ENCODE measurements at regions of chr17 and their contacts with region 1.

Region 1: GRCh38 chr17:50865984-50866774 is at the start of gene TOB1:
- DNase-seq: peak; percentile 93 to 98 (median 97)
- ATAC-seq: peak; percentile 59
- H3K4me3 ChIP-seq: peak within 1 kb of the TSS; percentile 92
- H3K4me3 Mint-ChIP-seq: peak within 1 kb of the TSS; percentile 98
- H3K27ac ChIP-seq: peak within 1 kb of the TSS; percentile 92 to 98
- H3K27ac Mint-ChIP-seq: peak within 1 kb of the TSS; percentile 98
- H3K4me1 ChIP-seq: peaks cover 38% of the 10 kb centered on the region
- H3K4me1 Mint-ChIP-seq: peaks cover 68% of the 10 kb centered on the region
- H3K27me3 ChIP-seq: no peaks in the 10 kb centered on the region
- H3K27me3 Mint-ChIP-seq: peaks cover 5% of the 10 kb centered on the region
- CTCF ChIP-seq: no peak
- total RNA-seq, gene TOB1: 419 to 449 TPM

Region 2: DNA sequence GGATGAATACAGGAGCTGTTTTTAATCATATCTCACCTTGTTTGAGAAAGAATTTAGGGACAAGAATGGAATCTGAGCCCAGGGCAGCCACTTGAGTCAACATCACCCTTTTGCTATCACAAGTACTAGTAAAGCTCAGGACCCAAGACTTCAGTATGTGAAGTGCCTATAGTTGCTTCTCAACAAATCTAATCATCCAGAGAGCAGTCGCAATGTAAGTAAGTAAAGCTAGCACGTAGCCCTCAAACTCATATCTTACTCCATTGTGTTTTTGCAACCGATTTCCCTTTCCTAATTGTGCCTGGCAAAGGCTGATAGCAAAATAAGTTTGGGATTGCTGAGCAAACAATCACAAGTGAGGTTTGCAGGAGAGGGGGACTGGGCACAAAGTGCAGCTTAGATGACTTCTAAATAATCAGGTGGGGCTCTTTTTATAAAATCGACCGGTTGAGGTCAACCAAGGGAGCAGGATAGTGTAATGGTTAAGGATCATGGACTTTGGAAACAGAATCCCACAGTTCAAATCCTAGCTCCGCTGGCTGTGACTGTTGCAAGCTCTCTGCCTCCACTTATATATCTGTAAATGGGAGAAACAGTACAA is 13.1 kb before region 1 on chr17:
- CTCF ChIA-PET with region 1: interaction called, 45 read pairs
- POLR2A ChIA-PET with region 1: interaction called, 143 read pairs
- intact Hi-C with region 1: loop called in 1 of 2 experiments (anchors 1 kb)
- DNase-seq: no peak
- ATAC-seq: no peak
- H3K4me3 ChIP-seq: no peak overlapping the region
- H3K4me3 Mint-ChIP-seq: peak overlapping the region; percentile 81
- H3K27ac ChIP-seq: no peak overlapping the region
- H3K27ac Mint-ChIP-seq: peak overlapping the region; percentile 81
- H3K4me1 ChIP-seq: peaks cover 12% of the 10 kb centered on the region
- H3K4me1 Mint-ChIP-seq: peaks cover 29% of the 10 kb centered on the region
- H3K27me3 ChIP-seq: no peaks in the 10 kb centered on the region
- H3K27me3 Mint-ChIP-seq: no peaks in the 10 kb centered on the region
- CTCF ChIP-seq: no peak

Region 3: DNA sequence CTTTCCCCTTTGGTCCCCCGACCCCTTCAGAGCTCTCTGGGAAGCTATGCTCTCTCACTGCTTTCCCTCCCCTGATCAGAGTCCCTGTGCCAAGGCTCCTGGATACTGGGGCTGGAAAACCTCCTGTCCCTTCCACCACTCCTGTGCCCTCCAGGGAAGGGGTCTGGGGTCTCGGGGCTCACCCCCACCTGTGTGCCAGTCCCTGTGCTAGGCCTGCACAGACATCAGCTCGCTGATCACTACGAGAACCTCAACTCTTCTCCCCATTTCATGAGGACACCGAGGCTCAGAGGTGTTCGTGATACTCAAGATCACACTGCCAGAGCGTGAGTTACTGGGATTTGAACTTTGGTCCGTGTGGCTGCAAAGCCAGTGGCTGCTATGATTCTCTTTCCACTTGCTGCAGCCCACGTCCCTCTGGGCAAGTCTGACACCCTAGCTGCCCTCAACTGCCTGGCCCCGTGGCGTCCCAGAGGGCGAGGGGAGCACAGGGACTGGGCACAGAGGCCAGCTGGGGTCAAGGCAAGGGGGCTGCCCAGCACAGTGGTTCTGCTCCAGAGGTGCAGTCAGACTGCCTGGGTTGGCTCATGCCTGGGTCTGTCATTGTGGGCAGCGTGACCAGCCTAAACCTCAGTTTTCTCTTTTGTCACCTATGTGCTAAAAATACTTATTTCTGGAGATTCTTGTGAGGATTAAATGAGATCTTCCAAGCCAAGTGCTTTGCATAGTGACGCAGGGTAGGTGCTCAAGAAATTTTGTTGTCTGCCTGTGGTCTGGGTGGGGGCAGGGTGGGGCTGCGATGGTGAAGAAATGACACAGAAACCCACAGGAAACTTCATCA is 43.8 kb after region 1 on chr17:
- CTCF ChIA-PET with region 1: interaction called, 5 read pairs
- POLR2A ChIA-PET with region 1: interaction called, 278 read pairs
- intact Hi-C with region 1: loop called in 1 of 2 experiments (anchors 1 kb)
- DNase-seq: peak; percentile 65 to 95 (median 80)
- ATAC-seq: peak; percentile 89
- H3K4me3 ChIP-seq: peak overlapping the region; percentile 4
- H3K4me3 Mint-ChIP-seq: peak overlapping the region; percentile 83
- H3K27ac ChIP-seq: peak overlapping the region; percentile 67 to 81
- H3K27ac Mint-ChIP-seq: peak overlapping the region; percentile 86
- H3K4me1 ChIP-seq: peaks cover 92% of the 10 kb centered on the region
- H3K4me1 Mint-ChIP-seq: peaks cover 64% of the 10 kb centered on the region
- H3K27me3 ChIP-seq: no peaks in the 10 kb centered on the region
- H3K27me3 Mint-ChIP-seq: no peaks in the 10 kb centered on the region
- CTCF ChIP-seq: peak; percentile 6

Region 4: DNA sequence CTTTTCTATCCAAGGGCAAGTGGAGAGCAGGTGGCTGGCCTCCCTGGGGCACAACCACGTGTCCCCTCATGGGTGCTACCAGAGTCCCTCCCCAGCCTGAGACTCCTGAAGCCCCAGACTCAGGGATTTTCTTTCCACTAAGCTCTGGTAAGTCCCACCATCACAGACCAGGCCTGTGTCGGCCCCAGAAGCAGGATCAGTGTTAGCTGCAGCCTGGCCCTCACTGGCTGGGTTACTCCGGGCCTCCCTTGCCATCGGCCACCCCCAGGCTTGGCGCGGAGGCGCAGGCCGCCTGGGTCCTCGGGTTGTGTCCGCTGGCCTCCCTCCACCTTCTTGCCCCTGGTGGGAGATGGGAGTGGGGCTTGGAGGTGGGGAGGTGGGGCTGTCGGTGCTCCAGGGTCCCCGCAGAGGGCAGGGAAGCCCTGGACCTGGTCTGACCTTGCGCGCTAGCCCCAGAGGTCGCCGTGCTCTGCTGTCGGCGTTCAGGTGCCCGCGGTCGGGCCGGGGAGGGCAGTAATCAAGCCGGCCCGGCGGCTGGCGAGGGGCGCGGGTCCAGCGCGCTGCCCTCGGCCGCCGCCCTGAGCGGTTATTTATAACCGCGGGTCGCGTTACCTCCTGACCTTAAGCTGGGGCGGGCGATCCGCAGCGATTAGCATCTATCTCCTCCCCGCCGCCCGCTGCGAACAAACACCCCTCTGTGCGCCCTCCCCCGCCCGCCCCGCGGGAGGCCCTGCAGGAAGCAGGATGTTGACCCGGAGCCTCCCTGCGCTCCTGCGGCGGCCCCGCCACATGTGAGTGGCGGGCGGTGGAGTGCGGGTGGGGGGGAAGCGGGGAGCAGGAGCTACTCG is 78.1 kb after region 1 on chr17:
- CTCF ChIA-PET with region 1: interaction called, 5 read pairs
- POLR2A ChIA-PET with region 1: interaction called, 211 read pairs
- intact Hi-C with region 1: no loop called
- DNase-seq: peak; percentile 55 to 88 (median 80)
- ATAC-seq: peak; percentile 89
- H3K4me3 ChIP-seq: peak overlapping the region; percentile 65
- H3K4me3 Mint-ChIP-seq: peak overlapping the region; percentile 83
- H3K27ac ChIP-seq: peak overlapping the region; percentile 68 to 77
- H3K27ac Mint-ChIP-seq: peak overlapping the region; percentile 85
- H3K4me1 ChIP-seq: peaks cover 61% of the 10 kb centered on the region
- H3K4me1 Mint-ChIP-seq: peaks cover 52% of the 10 kb centered on the region
- H3K27me3 ChIP-seq: no peaks in the 10 kb centered on the region
- H3K27me3 Mint-ChIP-seq: no peaks in the 10 kb centered on the region
- CTCF ChIP-seq: no peak

Region 5: DNA sequence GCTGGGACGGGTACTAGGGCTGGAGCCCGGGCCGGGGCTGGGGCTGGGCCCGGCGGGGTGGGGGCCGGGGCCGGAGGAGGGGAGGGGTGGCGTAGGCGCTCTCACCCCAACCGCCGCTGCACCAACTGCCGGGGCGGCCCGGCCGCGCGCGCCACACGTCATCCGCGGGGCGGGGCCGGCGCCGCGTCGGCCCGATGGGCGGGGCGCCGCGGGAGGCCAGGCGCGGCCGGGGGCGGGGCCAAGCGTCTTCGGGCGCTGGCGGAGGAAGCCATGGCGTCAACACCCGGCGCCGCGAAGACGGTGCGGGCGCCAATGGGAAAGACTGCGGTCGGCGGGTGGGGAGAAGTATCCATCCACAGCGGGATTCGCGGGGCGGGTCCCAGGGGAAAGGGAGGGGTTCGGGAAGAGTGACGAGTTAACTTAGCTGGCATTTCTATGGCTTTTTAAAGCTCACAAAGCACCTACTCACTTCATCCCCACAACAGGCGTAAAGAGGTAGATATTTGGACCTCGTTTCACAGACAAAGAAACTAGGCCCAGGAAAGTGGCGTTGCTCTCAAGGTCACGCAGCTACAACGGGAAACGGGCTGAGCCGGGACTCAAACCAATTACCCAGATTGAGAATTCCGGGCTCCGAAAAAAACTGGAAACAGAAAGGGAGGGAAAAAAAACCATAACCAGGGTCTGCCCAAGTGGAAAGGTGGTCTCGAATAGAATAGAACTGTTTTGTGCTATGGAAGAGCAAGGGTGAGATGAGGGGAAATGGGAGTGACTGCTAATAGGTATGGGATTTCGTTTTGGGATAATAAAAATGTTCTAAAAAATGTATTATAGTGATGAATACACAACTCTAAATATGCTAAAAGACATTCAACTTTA is 254.8 kb after region 1 on chr17 and contains the start of gene SPAG9:
- CTCF ChIA-PET with region 1: no interaction called
- POLR2A ChIA-PET with region 1: interaction called, 32 read pairs
- intact Hi-C with region 1: no loop called
- DNase-seq: peak; percentile 77 to 98 (median 86)
- ATAC-seq: peak; percentile 82
- H3K4me3 ChIP-seq: peak within 1 kb of the TSS; percentile 96
- H3K4me3 Mint-ChIP-seq: peak within 1 kb of the TSS; percentile 97
- H3K27ac ChIP-seq: peak within 1 kb of the TSS; percentile 92
- H3K27ac Mint-ChIP-seq: peak within 1 kb of the TSS; percentile 94
- H3K4me1 ChIP-seq: peaks cover 43% of the 10 kb centered on the region
- H3K4me1 Mint-ChIP-seq: peaks cover 54% of the 10 kb centered on the region
- H3K27me3 ChIP-seq: no peaks in the 10 kb centered on the region
- H3K27me3 Mint-ChIP-seq: no peaks in the 10 kb centered on the region
- CTCF ChIP-seq: no peak
- total RNA-seq, gene SPAG9: 60.2 to 64.6 TPM

Measured in CD4-positive, alpha-beta T cell (primary cell).